Vagina (tissue), 2 donors: ENCODE measurements at regions of chr11 and their contacts with region 1.

Region 1: GRCh38 chr11:18802381-18803257 is 11.0 kb upstream of the PTPN5 start:
- DNase-seq: no peak
- H3K4me3 ChIP-seq: no peak overlapping the region
- H3K27ac ChIP-seq: no peak overlapping the region
- H3K4me1 ChIP-seq: no peaks in the 10 kb centered on the region
- H3K27me3 ChIP-seq: no peaks in the 10 kb centered on the region
- CTCF ChIP-seq: peak in 1 of 3 experiments; percentile 10
- POLR2A ChIP-seq: no peak

Region 2: DNA sequence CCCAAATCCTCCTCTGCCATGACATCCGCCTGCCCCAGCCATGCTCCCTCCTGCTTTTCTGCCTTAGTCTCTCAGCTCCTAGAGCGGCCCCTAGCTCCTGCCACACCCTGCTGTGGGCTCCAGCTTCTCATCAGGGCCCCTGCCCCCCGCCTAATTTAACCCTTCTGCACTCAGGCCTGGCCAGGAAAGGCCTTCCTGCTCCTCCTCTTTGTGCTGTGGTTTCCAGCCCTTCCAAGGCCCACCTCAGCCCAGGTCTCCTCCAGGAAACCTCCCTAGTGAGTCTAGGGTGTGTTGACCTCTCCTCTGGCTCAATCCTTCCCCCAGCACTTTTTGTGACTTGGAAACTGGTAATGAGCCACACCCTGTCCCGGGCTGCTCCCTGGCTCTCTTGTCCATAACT is 22.3 kb before region 1 on chr11:
- intact Hi-C with region 1: loop called (anchors 1 kb)
- DNase-seq: no peak
- H3K4me3 ChIP-seq: no peak overlapping the region
- H3K27ac ChIP-seq: no peak overlapping the region
- H3K4me1 ChIP-seq: peaks cover 8% of the 10 kb centered on the region
- H3K27me3 ChIP-seq: no peaks in the 10 kb centered on the region
- CTCF ChIP-seq: no peak
- POLR2A ChIP-seq: no peak

Region 3: DNA sequence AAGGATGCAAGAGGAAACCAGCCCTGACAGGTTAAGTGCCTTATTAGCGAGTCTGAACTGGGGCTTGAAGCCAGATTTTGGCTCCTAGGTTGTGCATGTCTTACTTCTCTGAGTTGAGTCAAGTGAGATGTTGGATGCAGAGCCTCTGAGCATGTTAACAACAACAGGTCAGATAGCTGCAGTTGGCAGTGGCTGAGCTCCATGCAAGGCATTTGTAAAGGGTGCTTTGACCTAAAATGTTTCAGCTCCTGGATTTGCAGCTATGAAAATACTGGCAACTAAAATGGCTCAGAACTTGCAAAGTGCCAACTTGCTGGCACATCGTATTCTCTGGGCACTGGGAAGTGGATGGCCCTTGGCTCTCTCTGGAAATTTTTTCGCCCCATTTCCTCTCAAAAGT is 415.6 kb after region 1 on chr11:
- intact Hi-C with region 1: no loop called
- DNase-seq: no peak
- H3K4me3 ChIP-seq: no peak overlapping the region
- H3K27ac ChIP-seq: no peak overlapping the region
- H3K4me1 ChIP-seq: peaks cover 6% of the 10 kb centered on the region
- H3K27me3 ChIP-seq: no peaks in the 10 kb centered on the region
- CTCF ChIP-seq: no peak
- POLR2A ChIP-seq: no peak

Region 4: DNA sequence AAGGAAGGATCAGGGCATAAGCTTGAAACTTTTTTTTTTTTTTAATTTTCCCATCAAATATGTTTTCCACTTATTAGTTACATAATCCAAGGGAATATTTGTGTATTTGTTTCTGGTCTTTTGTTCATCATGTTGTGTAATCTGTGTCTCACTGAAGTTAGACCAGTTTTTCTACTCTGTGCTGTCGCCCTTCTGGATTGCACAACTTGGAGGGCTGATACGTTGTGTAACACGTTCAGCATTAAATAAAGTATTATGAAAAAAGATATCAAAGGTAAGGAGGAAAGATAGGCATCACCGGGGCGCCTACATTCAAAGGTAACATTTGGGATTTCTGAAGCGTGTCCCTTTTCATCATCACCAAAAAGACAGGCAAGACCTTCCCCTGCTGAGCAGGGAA is 441.5 kb after region 1 on chr11:
- intact Hi-C with region 1: no loop called
- DNase-seq: no peak
- H3K4me3 ChIP-seq: no peak overlapping the region
- H3K27ac ChIP-seq: no peak overlapping the region
- H3K4me1 ChIP-seq: peaks cover 33% of the 10 kb centered on the region
- H3K27me3 ChIP-seq: peaks cover 13% of the 10 kb centered on the region
- CTCF ChIP-seq: no peak
- POLR2A ChIP-seq: no peak